Endothelial cell of umbilical vein (primary cell): ENCODE measurements at regions of chr21 and their contacts with region 1.

Region 1: DNA sequence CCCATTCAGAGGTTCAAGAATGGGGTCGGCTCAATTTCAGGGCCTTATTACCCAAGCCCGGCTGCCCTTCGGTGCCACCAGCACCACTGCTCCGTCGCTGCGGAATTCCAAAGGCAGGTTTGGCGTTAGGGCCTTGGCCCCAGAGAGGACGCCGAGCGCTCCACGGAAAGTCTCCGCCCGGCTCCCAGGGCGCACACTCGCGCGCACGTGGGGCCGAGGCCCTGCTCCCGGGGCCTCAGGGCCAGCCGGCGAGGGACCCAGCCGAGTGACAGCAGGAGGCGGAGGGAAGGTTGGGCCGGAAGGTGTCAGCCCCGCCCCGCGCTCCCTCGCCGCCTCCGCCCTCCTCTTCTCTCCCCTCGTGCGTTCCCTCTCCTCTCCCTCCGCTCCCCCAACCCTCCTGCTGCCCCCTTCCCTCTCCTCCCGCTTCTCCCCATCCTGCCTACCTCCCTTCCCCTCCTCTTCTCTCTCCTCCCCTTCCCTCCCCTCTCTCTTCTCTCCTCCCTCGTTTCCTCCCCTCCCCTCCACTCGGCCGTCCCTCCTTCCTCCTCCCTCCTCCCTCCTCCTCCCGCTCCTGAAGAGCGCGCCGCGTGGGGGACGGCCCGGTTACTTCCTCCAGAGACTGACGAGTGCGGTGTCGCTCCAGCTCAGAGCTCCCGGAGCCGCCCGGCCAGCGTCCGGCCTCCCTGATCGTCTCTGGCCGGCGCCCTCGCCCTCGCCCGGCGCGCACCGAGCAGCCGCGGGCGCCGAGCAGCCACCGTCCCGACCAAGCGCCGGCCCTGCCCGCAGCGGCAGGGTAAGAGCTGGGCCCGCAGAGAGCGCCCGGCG is at the start of gene ETS2:
- DNase-seq: peak; percentile 81
- H3K4me3 ChIP-seq: peak within 1 kb of the TSS; percentile 93 to 98 (median 97)
- H3K27ac ChIP-seq: peak within 1 kb of the TSS; percentile 74
- H3K4me1 ChIP-seq: peaks cover 35% of the 10 kb centered on the region
- H3K27me3 ChIP-seq: no peaks in the 10 kb centered on the region
- CTCF ChIP-seq: no peak
- POLR2A ChIP-seq: peak; percentile 85
- total RNA-seq, gene ETS2: 42.1 and 54.5 TPM in 2 replicates

Region 2: DNA sequence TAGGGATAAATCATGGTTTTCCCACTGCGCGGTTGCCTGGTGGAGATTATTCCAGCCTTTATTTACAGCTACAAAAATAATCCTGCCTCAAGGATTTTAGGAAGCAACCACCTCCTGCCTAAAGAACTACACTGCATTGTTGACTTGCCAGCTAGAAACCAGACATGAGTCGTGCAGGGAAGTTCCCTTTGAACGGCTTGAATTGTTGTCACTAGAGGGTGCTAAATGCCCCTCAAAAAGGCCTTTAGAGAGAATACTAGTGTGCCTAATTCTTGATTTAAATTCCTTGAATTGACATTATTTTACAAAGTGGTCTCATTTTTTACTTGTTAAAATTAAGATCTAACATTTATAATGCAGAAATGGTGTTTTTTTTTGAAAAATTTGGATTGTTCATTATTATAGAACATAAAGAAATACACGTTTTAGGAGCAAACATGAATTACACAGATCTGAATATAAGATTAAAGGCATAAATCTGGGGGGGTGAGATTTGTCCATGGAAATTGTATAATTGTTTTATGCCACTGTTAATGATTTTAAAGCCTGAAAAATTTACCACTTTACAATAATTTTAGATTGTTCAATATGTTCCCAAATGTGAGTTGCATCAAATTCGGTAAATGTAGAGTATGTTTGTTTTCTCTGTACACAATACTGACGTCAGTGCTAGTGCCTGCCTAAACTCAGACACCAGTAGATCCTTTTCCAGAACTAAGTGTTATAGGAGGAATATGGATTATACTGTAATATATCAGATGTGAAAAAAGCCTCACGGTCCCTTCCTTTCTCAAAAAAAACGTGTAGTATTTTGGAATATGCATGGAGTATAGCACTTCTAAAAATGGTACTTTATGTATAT is 299.7 kb before region 1 on chr21:
- CTCF ChIA-PET with region 1: interaction called, 4 read pairs
- POLR2A ChIA-PET with region 1: no interaction called
- dilution Hi-C with region 1: no loop called
- intact Hi-C with region 1: loop called (anchors 2 kb)
- DNase-seq: peak; percentile 93
- H3K4me3 ChIP-seq: peak overlapping the region; percentile 7 to 93 (median 43)
- H3K27ac ChIP-seq: peak overlapping the region; percentile 97
- H3K4me1 ChIP-seq: peaks cover 48% of the 10 kb centered on the region
- H3K27me3 ChIP-seq: no peaks in the 10 kb centered on the region
- CTCF ChIP-seq: peak; percentile 62 to 65
- POLR2A ChIP-seq: peak; percentile 45

Region 3: DNA sequence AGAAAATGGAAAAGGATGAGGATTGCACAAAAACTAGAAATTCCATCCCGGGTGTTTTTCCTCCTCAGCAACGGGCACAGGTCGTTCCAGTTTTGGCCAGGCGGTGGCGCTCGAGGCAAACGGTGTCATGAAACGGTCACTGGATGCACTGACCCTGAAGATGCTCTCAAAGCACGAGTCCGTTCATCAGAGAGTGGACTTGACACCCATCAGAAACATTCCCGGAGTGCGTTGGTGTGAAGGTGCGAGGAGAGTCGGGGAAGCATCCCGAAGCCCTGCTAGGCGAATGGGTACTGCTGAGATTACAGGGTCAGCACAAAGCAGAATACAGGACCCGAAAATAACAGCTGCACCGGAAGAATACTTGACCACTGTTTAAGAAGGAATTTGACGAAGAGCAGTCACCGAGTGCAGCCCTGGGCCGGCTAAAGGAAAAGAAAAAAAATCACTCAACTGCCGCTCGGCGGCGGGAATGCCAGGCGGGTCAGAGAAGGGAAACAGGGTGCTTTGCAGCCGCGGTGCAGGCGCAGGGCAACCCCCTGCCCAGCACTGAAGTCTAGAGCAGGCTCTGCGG is 71.5 kb before region 1 on chr21:
- CTCF ChIA-PET with region 1: interaction called, 10 read pairs
- POLR2A ChIA-PET with region 1: no interaction called
- dilution Hi-C with region 1: no loop called
- intact Hi-C with region 1: loop called (anchors 1 kb)
- DNase-seq: peak; percentile 87
- H3K4me3 ChIP-seq: peak overlapping the region in 2 of 3 experiments; percentile 1 to 31
- H3K27ac ChIP-seq: no peak overlapping the region
- H3K4me1 ChIP-seq: peaks cover 9% of the 10 kb centered on the region
- H3K27me3 ChIP-seq: peaks cover 3% of the 10 kb centered on the region in 2 experiments
- CTCF ChIP-seq: peak; percentile 91 to 94
- POLR2A ChIP-seq: no peak

Region 4: GRCh38 chr21:38839328-38840286 is 34.1 kb after region 1 on chr21:
- CTCF ChIA-PET with region 1: no interaction called
- POLR2A ChIA-PET with region 1: no interaction called
- dilution Hi-C with region 1: no loop called
- intact Hi-C with region 1: no loop called
- DNase-seq: peak; percentile 65
- H3K4me3 ChIP-seq: no peak overlapping the region
- H3K27ac ChIP-seq: peak overlapping the region; percentile 62
- H3K4me1 ChIP-seq: peaks cover 22% of the 10 kb centered on the region
- H3K27me3 ChIP-seq: no peaks in the 10 kb centered on the region
- CTCF ChIP-seq: no peak
- POLR2A ChIP-seq: no peak

Region 5: DNA sequence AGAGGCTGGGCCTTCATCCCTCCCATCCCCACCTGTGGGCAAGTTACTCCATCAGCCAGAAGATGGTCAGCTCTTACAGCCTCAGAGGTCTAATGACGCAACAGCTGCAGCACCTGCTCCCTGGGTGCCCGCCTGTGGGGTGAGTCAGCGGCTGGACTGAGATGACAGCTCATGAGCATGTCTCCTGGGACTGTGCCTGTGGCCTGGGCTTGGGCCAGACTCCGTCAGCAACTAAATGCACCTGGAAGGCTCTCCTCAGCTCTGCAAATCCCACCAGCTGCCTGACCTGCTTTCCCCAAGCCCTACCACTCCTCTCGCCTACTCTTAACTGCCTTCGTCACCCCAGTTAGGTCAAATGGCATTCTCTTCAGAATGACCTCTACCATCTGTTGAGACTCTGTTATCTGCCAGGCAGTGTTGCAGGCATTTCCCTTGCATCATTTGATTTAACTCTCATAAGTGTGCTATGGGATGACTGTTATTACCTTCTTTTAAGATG is 47.9 kb after region 1 on chr21:
- CTCF ChIA-PET with region 1: interaction called, 3 read pairs
- POLR2A ChIA-PET with region 1: no interaction called
- dilution Hi-C with region 1: no loop called
- intact Hi-C with region 1: loop called (anchors 1 kb)
- DNase-seq: peak; percentile 88
- H3K4me3 ChIP-seq: no peak overlapping the region
- H3K27ac ChIP-seq: peak overlapping the region; percentile 73
- H3K4me1 ChIP-seq: peaks cover 41% of the 10 kb centered on the region
- H3K27me3 ChIP-seq: no peaks in the 10 kb centered on the region
- CTCF ChIP-seq: no peak
- POLR2A ChIP-seq: no peak

Region 6: GRCh38 chr21:39125752-39126485 is 320.4 kb after region 1 on chr21:
- CTCF ChIA-PET with region 1: interaction called, 14 read pairs
- POLR2A ChIA-PET with region 1: no interaction called
- dilution Hi-C with region 1: no loop called
- intact Hi-C with region 1: loop called (anchors 1 kb)
- DNase-seq: peak; percentile 68
- H3K4me3 ChIP-seq: no peak overlapping the region
- H3K27ac ChIP-seq: no peak overlapping the region
- H3K4me1 ChIP-seq: no peaks in the 10 kb centered on the region
- H3K27me3 ChIP-seq: peaks cover 0 to 2% of the 10 kb centered on the region in 2 experiments
- CTCF ChIP-seq: peak; percentile 51 to 73
- POLR2A ChIP-seq: no peak